ENCODE measurements at regions of chr10 and their contacts with region 1.

Region 1: GRCh38 chr10:97334370-97335175 is at the start of gene FRAT2:
- DNase-seq: peak; percentile 92
- H3K4me3 ChIP-seq: peak within 1 kb of the TSS; percentile 70 to 89 (median 84)
- H3K27ac ChIP-seq: peak within 1 kb of the TSS; percentile 87 to 92 (median 89)
- H3K4me1 ChIP-seq: peaks cover 31 to 51% of the 10 kb centered on the region in 2 donors
- H3K27me3 ChIP-seq: no peaks in the 10 kb centered on the region
- CTCF ChIP-seq: peak in 1 of 6 experiments; percentile 15
- POLR2A ChIP-seq: peak in 1 of 2 donors; percentile 95
- total RNA-seq, gene FRAT2: 19.5 to 23.2 (median 21.8) TPM

Region 2: GRCh38 chr10:97280783-97281182 is 53.8 kb before region 1 on chr10:
- intact Hi-C with region 1: loop called (anchors 10 kb)
- DNase-seq: no peak
- H3K4me3 ChIP-seq: no peak overlapping the region
- H3K27ac ChIP-seq: no peak overlapping the region
- H3K4me1 ChIP-seq: peaks cover 6 to 11% of the 10 kb centered on the region in 2 donors
- H3K27me3 ChIP-seq: no peaks in the 10 kb centered on the region
- CTCF ChIP-seq: no peak
- POLR2A ChIP-seq: no peak

Measured in thyroid gland (tissue), 4 donors.